Activated T-helper 1 cell treated with anti-CD3 and anti-CD28 coated beads, Interleukin-12 subunit alpha, Interleukin-12 subunit beta, Interleukin-2, Interleukin-4 antibody, amounts not matched to agents 30 ng/mL and 10 ng/mL and 1 ng/mL, durations not matched to agents 14 hours and 24 hours and 36 hours (primary cell): ENCODE measurements at regions of chr10 and their contacts with region 1.

Region 1: GRCh38 chr10:102743588-102744373 is at the start of gene WBP1L:
- DNase-seq: peak; percentile 94
- H3K4me3 Mint-ChIP-seq: peak within 1 kb of the TSS; percentile 92
- H3K27ac Mint-ChIP-seq: peak within 1 kb of the TSS; percentile 93
- H3K4me1 Mint-ChIP-seq: peaks cover 46% of the 10 kb centered on the region
- H3K27me3 Mint-ChIP-seq: peaks cover 1% of the 10 kb centered on the region
- total RNA-seq, gene WBP1L: 19.4 and 20.0 TPM in 2 replicates

Region 2: DNA sequence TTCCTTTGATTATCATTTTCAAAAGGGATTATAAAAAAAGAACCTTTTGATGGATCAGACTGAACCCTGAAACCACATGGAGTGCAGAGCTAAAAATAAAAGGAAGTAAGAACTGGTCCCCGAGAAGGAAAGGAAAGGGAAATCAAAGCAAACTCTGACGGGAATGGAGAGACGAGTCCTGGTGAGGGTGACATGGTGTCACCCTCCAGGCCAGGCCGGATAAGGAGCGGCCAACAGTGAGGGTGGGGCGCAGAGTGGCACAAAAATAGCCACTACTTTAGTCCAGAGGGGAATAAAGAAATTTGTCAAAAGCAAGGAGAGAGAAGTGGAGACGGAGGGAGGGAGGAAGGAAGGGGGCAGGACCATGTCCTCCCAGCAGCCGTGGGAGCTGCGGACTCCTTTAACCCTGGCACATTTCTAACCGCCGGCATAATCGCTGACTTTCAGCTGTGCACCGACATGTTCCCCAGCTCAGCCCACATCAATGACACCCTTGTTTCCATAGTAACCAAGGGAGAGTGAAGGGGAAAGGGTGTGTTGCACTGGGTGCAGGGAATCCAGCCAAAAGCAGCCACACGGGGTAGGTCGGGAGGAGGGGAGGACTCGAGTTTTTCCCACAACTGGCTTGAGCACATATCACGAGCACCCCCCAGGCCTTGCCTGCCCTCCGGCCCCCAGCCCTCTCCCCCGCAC is 69.8 kb before region 1 on chr10:
- intact Hi-C with region 1: loop called (anchors 2 kb)
- DNase-seq: peak; percentile 69
- H3K4me3 Mint-ChIP-seq: peak overlapping the region; percentile 71
- H3K27ac Mint-ChIP-seq: peak overlapping the region; percentile 69
- H3K4me1 Mint-ChIP-seq: peaks cover 25% of the 10 kb centered on the region
- H3K27me3 Mint-ChIP-seq: no peaks in the 10 kb centered on the region

Region 3: DNA sequence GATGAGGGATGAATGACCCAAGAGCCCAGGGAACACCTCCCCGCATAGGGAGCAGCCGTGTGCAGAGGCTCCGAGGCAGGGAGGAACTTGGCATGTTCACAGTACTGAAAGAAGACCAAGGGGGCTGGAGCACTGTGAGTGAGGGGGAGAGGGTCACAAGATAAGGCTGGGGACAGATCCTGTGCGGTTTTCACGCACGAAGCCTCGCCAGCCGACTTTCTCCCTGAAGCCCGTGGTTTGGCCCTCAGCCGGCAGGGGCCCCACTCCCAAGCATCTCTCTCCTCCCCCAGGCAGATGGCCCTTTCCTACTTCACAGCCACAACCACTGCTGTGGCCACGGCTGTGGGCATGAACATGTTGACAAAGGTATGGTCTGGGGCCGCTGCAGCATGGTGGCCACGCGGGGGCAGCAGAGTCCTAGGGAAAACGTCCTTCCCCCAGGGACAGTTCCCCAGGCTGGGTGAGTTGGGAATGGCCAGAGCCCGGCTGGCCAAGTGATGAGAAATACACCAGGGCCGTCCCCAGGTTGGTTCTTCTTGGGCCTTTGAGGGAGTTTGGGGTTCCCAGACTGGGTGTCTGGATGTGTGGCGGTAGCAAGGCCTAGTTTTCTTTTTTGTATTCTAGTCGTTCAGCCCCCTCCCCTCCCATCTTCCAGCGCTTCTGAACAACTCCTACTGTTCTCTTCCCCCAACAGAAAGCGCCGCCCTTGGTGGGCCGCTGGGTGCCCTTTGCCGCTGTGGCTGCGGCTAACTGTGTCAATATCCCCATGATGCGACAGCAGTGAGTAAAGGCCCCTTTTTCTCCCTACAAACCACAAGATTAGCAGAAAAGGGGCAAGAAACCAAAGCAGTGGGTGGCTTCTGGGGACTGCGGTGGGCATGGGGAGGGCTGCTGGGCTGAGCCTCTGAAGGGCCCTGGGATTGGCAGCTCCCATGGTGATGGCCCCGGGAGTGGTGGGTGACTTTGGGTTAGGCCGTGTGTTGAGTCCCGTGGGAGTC is 14.5 kb before region 1 on chr10:
- intact Hi-C with region 1: no loop called
- DNase-seq: peak; percentile 41
- H3K4me3 Mint-ChIP-seq: no peak overlapping the region
- H3K27ac Mint-ChIP-seq: no peak overlapping the region
- H3K4me1 Mint-ChIP-seq: peaks cover 10% of the 10 kb centered on the region
- H3K27me3 Mint-ChIP-seq: no peaks in the 10 kb centered on the region

Region 4: GRCh38 chr10:102776779-102777456 is 33.1 kb after region 1 on chr10:
- intact Hi-C with region 1: loop called (anchors 2 kb)
- DNase-seq: no peak
- H3K4me3 Mint-ChIP-seq: no peak overlapping the region
- H3K27ac Mint-ChIP-seq: no peak overlapping the region
- H3K4me1 Mint-ChIP-seq: peaks cover 55% of the 10 kb centered on the region
- H3K27me3 Mint-ChIP-seq: no peaks in the 10 kb centered on the region

Region 5: DNA sequence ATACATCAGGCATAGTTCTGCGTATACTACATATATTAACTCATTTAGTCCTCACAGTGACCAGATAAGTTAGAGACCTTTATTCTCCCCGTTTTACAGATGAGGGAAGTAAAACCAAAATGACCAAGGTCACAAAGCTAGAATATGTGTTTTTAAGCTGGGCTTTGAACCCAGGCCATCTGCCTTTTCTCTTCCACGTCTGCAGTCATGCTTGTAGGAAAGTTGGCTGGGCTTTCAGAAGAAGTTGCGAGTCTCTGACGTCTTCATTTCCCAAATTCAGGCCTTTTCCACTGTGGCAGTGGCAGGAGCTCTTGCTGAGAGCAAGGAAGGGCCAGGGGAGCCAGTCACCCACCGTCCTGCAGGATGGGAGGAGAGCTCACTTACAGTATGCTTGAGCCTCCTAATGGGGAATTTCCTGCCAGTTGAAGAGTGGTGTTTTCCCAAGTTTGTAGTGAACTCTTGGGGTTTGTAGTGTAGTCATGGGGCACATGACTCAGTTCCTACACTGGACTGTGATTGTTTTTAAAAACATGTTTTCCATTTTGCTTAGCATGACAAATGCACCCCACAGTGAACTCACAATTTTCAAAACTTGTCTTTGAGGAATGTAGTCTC is 59.2 kb after region 1 on chr10:
- intact Hi-C with region 1: loop called (anchors 2 kb)
- DNase-seq: peak; percentile 27
- H3K4me3 Mint-ChIP-seq: peak overlapping the region; percentile 76
- H3K27ac Mint-ChIP-seq: peak overlapping the region; percentile 98
- H3K4me1 Mint-ChIP-seq: peaks cover 34% of the 10 kb centered on the region
- H3K27me3 Mint-ChIP-seq: no peaks in the 10 kb centered on the region

Region 6: DNA sequence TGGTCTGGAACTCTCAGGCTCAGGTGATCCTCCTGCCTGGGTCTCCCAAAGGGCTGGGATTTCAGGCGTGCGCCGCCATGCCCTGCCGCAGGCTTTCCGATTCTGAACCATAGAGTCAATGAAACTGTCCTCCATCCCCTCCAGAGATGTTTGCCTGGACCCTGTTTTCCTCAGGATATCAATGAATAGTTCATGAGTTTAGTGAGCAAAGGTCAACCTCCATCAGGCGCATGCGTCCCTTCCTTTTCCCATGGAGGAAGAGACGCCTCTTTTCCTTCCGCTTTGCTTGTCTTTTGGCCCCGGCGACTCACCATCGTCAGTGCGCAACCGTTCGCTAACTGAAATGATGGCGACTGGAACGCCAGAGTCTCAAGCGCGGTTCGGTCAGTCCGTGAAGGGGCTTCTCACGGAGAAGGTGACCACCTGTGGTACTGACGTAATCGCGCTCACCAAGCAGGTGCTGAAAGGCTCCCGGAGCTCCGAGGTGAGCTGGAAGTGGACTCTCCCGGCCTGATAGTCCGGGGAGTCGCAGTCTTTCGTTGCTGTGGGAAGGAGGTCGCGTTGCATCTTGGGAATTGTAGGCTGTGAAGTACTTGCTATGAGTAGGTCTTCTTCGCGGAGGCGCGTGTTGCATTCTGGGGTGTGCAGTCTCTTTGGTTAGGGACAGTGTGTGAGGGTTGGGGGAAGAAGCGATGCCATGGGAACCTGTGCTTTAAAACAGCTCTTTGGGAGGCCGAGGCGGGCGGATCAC is 110.3 kb after region 1 on chr10 and contains the start of gene BORCS7:
- intact Hi-C with region 1: loop called (anchors 1 kb)
- DNase-seq: peak; percentile 84
- H3K4me3 Mint-ChIP-seq: peak within 1 kb of the TSS; percentile 82
- H3K27ac Mint-ChIP-seq: peak within 1 kb of the TSS; percentile 92
- H3K4me1 Mint-ChIP-seq: peaks cover 19% of the 10 kb centered on the region
- H3K27me3 Mint-ChIP-seq: no peaks in the 10 kb centered on the region
- total RNA-seq, gene BORCS7: 9.7 and 12.6 TPM in 2 replicates

Region 7: GRCh38 chr10:103396064-103396788 is 652.4 kb after region 1 on chr10 and contains the starts of genes ATP5MK and PDCD11:
- intact Hi-C with region 1: loop called (anchors 1 kb)
- DNase-seq: peak; percentile 95
- H3K4me3 Mint-ChIP-seq: peak within 1 kb of the TSS; percentile 99
- H3K27ac Mint-ChIP-seq: peak within 1 kb of the TSS; percentile 96
- H3K4me1 Mint-ChIP-seq: peaks cover 58% of the 10 kb centered on the region
- H3K27me3 Mint-ChIP-seq: no peaks in the 10 kb centered on the region
- total RNA-seq, gene ATP5MK: 480 and 483 TPM in 2 replicates
- total RNA-seq, gene PDCD11: 98.4 and 99.0 TPM in 2 replicates